CD8-positive, alpha-beta T cell (primary cell): ENCODE measurements at regions of chr2 and their contacts with region 1.

Region 1: GRCh38 chr2:197239434-197239833 is 71.1 kb downstream of the ANKRD44 start:
- DNase-seq: peak in 2 of 9 experiments; percentile 36 to 62
- ATAC-seq: peak; percentile 41
- H3K4me3 ChIP-seq: peak overlapping the region; percentile 38 to 41
- H3K4me3 Mint-ChIP-seq: peak overlapping the region; percentile 84
- H3K27ac ChIP-seq: peak overlapping the region; percentile 39 to 89
- H3K27ac Mint-ChIP-seq: peak overlapping the region; percentile 96
- H3K4me1 ChIP-seq: peaks cover 88% of the 10 kb centered on the region
- H3K4me1 Mint-ChIP-seq: peaks cover 87% of the 10 kb centered on the region
- H3K27me3 ChIP-seq: no peaks in the 10 kb centered on the region
- H3K27me3 Mint-ChIP-seq: no peaks in the 10 kb centered on the region
- CTCF ChIP-seq: no peak

Region 2: DNA sequence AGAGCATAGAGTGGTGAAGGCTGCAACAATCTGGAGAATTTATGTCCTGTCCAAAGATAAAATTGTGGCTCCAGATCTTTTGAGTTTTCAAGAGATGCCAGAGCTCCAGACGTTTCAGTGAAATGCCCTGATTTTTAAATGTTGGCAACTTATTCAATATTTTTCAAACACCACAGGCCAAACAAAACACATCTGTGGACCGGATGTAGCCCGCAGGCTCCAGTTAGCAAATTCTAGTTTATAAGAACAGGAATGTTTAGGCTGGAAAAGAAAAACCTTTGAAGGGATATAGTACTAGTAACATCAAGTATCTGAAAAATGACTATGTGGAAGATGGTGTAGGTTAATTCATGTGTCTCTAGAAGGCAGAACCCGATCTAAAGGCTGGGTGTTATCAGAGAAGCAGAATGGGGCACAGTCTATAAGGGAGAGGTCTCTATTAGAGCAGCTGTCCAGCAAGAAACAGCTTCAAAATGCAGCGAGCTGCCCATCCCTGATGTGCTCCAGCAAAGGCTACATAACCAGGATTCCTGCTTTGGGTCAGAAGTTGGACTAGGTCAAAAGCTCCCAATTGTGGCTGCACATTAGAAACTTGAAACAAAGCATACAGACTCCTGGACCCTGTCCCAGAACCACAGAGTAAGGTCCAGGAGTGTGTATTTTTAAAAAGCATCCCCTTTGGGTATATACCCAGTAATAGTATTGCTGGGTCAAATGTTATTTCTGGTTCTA is 34.7 kb before region 1 on chr2:
- CTCF ChIA-PET with region 1: interaction called, 16 read pairs
- POLR2A ChIA-PET with region 1: interaction called, 15 read pairs
- intact Hi-C with region 1: loop called (anchors 2 to 5 kb)
- DNase-seq: no peak
- ATAC-seq: no peak
- H3K4me3 ChIP-seq: no peak overlapping the region
- H3K4me3 Mint-ChIP-seq: peak overlapping the region; percentile 12
- H3K27ac ChIP-seq: peak overlapping the region; percentile 87 to 89
- H3K27ac Mint-ChIP-seq: peak overlapping the region; percentile 100
- H3K4me1 ChIP-seq: peaks cover 94% of the 10 kb centered on the region
- H3K4me1 Mint-ChIP-seq: peaks cover 93% of the 10 kb centered on the region
- H3K27me3 ChIP-seq: no peaks in the 10 kb centered on the region
- H3K27me3 Mint-ChIP-seq: no peaks in the 10 kb centered on the region
- CTCF ChIP-seq: no peak

Region 3: DNA sequence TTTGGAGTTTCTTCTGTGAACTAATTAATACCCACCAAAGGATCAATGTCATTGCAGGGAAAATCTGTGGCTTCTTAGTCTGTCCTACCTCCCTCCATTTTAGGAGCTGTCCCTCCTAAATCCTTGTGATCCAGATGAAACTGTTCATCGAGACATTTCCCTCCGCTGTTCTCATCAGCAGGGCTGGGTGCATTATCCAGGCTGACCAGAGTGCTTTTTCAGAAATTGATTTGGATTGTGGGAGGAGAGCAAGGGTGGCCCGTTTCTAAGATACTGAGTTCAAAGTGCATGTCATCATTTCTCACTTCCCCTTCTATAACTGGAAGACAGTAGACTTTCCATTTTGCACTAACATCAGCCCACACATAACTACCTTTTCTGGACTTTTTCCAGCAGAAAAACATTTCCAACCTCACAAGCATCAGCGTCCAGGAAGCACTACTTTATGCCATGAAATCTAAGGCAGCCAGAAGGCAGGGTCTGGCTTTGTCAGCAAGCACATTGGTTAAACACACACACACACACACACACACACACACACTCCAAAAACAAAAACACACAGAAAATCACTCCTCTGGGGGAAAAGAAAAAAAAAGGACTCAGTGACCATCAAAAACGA is 23.0 kb before region 1 on chr2:
- CTCF ChIA-PET with region 1: interaction called, 3 read pairs
- POLR2A ChIA-PET with region 1: interaction called, 10 read pairs
- intact Hi-C with region 1: loop called (anchors 2 kb)
- DNase-seq: peak in 1 of 9 experiments; percentile 44
- ATAC-seq: peak; percentile 12
- H3K4me3 ChIP-seq: no peak overlapping the region
- H3K4me3 Mint-ChIP-seq: peak overlapping the region; percentile 23
- H3K27ac ChIP-seq: peak overlapping the region in 1 of 2 experiments; percentile 38
- H3K27ac Mint-ChIP-seq: peak overlapping the region; percentile 100
- H3K4me1 ChIP-seq: peaks cover 79% of the 10 kb centered on the region
- H3K4me1 Mint-ChIP-seq: peaks cover 86% of the 10 kb centered on the region
- H3K27me3 ChIP-seq: no peaks in the 10 kb centered on the region
- H3K27me3 Mint-ChIP-seq: no peaks in the 10 kb centered on the region
- CTCF ChIP-seq: no peak

Region 4: GRCh38 chr2:197255543-197255942 is 16.1 kb after region 1 on chr2:
- CTCF ChIA-PET with region 1: interaction called, 5 read pairs
- POLR2A ChIA-PET with region 1: interaction called, 8 read pairs
- intact Hi-C with region 1: loop called in 1 of 2 experiments (anchors 1 kb)
- DNase-seq: peak; percentile 45 to 92 (median 72)
- ATAC-seq: peak; percentile 79
- H3K4me3 ChIP-seq: peak overlapping the region; percentile 9 to 38
- H3K4me3 Mint-ChIP-seq: peak overlapping the region; percentile 74
- H3K27ac ChIP-seq: peak overlapping the region; percentile 46 to 70
- H3K27ac Mint-ChIP-seq: peak overlapping the region; percentile 95
- H3K4me1 ChIP-seq: peaks cover 83% of the 10 kb centered on the region
- H3K4me1 Mint-ChIP-seq: peaks cover 82% of the 10 kb centered on the region
- H3K27me3 ChIP-seq: no peaks in the 10 kb centered on the region
- H3K27me3 Mint-ChIP-seq: no peaks in the 10 kb centered on the region
- CTCF ChIP-seq: no peak

Region 5: GRCh38 chr2:198016243-198016642 is 776.8 kb after region 1 on chr2:
- CTCF ChIA-PET with region 1: no interaction called
- POLR2A ChIA-PET with region 1: no interaction called
- intact Hi-C with region 1: no loop called
- DNase-seq: no peak
- ATAC-seq: no peak
- H3K4me3 ChIP-seq: no peak overlapping the region
- H3K4me3 Mint-ChIP-seq: no peak overlapping the region
- H3K27ac ChIP-seq: no peak overlapping the region
- H3K27ac Mint-ChIP-seq: no peak overlapping the region
- H3K4me1 ChIP-seq: no peaks in the 10 kb centered on the region
- H3K4me1 Mint-ChIP-seq: peaks cover 8% of the 10 kb centered on the region
- H3K27me3 ChIP-seq: no peaks in the 10 kb centered on the region
- H3K27me3 Mint-ChIP-seq: no peaks in the 10 kb centered on the region
- CTCF ChIP-seq: no peak